ENCODE measurements at regions of chr12 and their contacts with region 1.

Region 1: DNA sequence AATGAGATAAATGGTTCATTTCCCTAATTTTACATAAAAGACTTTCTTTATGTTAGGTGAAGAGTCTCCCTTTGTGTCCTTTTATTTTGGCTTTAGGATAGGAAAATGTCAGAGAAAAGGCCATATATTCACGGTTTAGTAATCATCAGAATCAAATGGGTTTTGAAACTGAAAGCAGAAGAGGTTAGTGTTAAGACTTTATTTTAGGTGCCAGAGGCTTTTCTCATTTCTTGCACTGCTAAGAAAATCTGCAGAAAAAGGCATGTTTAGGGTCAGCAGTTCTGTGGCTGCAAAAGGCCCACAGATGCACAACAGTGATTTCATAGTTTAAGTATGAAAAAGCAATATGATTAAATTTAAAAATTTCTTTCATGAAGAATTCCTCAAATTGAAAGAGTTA is 80.4 kb upstream of the SINHCAF start:
- DNase-seq: no peak
- H3K4me3 ChIP-seq: no peak overlapping the region
- H3K27ac ChIP-seq: no peak overlapping the region
- H3K4me1 ChIP-seq: no peaks in the 10 kb centered on the region
- H3K27me3 ChIP-seq: no peaks in the 10 kb centered on the region
- CTCF ChIP-seq: no peak
- POLR2A ChIP-seq: no peak

Region 2: GRCh38 chr12:31634620-31635019 is 228.3 kb after region 1 on chr12:
- intact Hi-C with region 1: loop called (anchors 5 kb)
- DNase-seq: no peak
- H3K4me3 ChIP-seq: no peak overlapping the region
- H3K27ac ChIP-seq: no peak overlapping the region
- H3K4me1 ChIP-seq: peaks cover 0 to 6% (median 0%) of the 10 kb centered on the region in 3 donors
- H3K27me3 ChIP-seq: no peaks in the 10 kb centered on the region
- CTCF ChIP-seq: no peak
- POLR2A ChIP-seq: no peak

Measured in esophagus squamous epithelium (tissue), 5 donors.